Naive thymus-derived CD4-positive, alpha-beta T cell (primary cell): ENCODE measurements at regions of chr2 and their contacts with region 1.

Region 1: DNA sequence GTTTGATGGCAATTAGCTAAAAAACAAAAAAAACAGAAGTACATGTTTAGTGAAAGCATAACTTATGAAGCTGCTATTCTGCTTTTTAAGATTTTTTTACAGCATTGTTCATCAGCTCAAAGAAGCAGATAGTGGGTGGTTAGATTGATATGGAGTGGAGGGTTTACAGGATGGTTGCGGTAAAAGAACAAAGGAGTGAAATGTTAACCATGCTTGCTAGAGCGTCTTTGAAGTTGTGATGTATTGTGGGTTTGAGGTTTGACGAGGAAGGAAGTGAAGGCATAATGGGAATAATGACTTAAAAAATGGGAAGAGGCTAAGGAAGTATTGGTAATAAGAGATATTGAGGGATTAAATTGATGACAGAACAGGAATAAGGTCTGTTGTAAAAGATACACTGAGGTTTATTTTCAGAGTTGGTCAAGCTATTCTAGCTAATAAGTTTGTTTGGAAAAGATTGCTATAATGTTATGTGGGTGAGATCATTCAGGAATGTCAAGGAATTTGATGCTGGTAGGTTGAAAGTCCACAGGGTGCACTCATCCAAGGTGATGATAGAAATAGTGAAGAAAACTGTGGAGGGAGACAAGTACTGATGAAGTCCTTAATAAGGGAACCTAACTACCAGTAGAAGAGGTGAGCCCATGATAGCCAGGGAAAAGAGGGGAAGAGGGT is 14.6 kb downstream of the SPOPL start:
- DNase-seq: peak in 6 of 9 donors; percentile 17 to 41 (median 34)
- ATAC-seq: peak; percentile 61
- H3K4me3 ChIP-seq: no peak overlapping the region
- H3K4me3 Mint-ChIP-seq: peak overlapping the region in 8 of 10 donors; percentile 0 to 49 (median 8)
- H3K27ac ChIP-seq: no peak overlapping the region
- H3K27ac Mint-ChIP-seq: no peak overlapping the region
- H3K4me1 ChIP-seq: peaks cover 8 to 9% of the 10 kb centered on the region in 2 donors
- H3K4me1 Mint-ChIP-seq: peaks cover 12 to 63% (median 53%) of the 10 kb centered on the region in 7 donors
- H3K27me3 ChIP-seq: no peaks in the 10 kb centered on the region
- H3K27me3 Mint-ChIP-seq: peaks cover 0 to 12% (median 7%) of the 10 kb centered on the region in 5 donors

Region 2: GRCh38 chr2:138501425-138502283 is 14.5 kb before region 1 on chr2 and contains the start of gene SPOPL:
- CTCF ChIA-PET with region 1: no interaction called
- POLR2A ChIA-PET with region 1: no interaction called
- intact Hi-C with region 1: loop called (anchors 1 to 2 kb)
- DNase-seq: peak; percentile 67 to 90 (median 78)
- ATAC-seq: peak; percentile 93
- H3K4me3 ChIP-seq: peak within 1 kb of the TSS; percentile 86
- H3K4me3 Mint-ChIP-seq: peak within 1 kb of the TSS; percentile 90 to 99 (median 96)
- H3K27ac ChIP-seq: peak within 1 kb of the TSS; percentile 61
- H3K27ac Mint-ChIP-seq: peak within 1 kb of the TSS; percentile 71 to 97 (median 87)
- H3K4me1 ChIP-seq: peaks cover 11 to 20% of the 10 kb centered on the region in 2 donors
- H3K4me1 Mint-ChIP-seq: peaks cover 29 to 50% (median 44%) of the 10 kb centered on the region in 7 donors
- H3K27me3 ChIP-seq: no peaks in the 10 kb centered on the region
- H3K27me3 Mint-ChIP-seq: peaks cover 0 to 4% (median 0%) of the 10 kb centered on the region in 5 donors
- total RNA-seq, gene SPOPL: 10.7 to 25.7 (median 12.5) TPM

Region 3: GRCh38 chr2:140270224-140270623 is 1754.1 kb after region 1 on chr2:
- CTCF ChIA-PET with region 1: no interaction called
- POLR2A ChIA-PET with region 1: no interaction called
- intact Hi-C with region 1: no loop called
- DNase-seq: no peak
- ATAC-seq: no peak
- H3K4me3 ChIP-seq: no peak overlapping the region
- H3K4me3 Mint-ChIP-seq: no peak overlapping the region
- H3K27ac ChIP-seq: no peak overlapping the region
- H3K27ac Mint-ChIP-seq: no peak overlapping the region
- H3K4me1 ChIP-seq: no peaks in the 10 kb centered on the region
- H3K4me1 Mint-ChIP-seq: no peaks in the 10 kb centered on the region
- H3K27me3 ChIP-seq: no peaks in the 10 kb centered on the region
- H3K27me3 Mint-ChIP-seq: no peaks in the 10 kb centered on the region